ENCODE measurements at regions of chr3 and their contacts with region 1.

Region 1: GRCh38 chr3:141105828-141106628 is 54.9 kb downstream of the SPSB4 start:
- DNase-seq: no peak
- ATAC-seq: peak; percentile 37
- H3K4me3 Mint-ChIP-seq: no peak overlapping the region
- H3K27ac Mint-ChIP-seq: no peak overlapping the region
- H3K4me1 Mint-ChIP-seq: no peaks in the 10 kb centered on the region
- H3K27me3 Mint-ChIP-seq: peaks cover 6% of the 10 kb centered on the region
- CTCF ChIP-seq: no peak

Region 2: GRCh38 chr3:139427283-139427993 is 1678.6 kb before region 1 on chr3:
- CTCF ChIA-PET with region 1: no interaction called
- POLR2A ChIA-PET with region 1: no interaction called
- intact Hi-C with region 1: loop called (anchors 5 kb)
- DNase-seq: no peak
- ATAC-seq: peak; percentile 42
- H3K4me3 Mint-ChIP-seq: no peak overlapping the region
- H3K27ac Mint-ChIP-seq: no peak overlapping the region
- H3K4me1 Mint-ChIP-seq: no peaks in the 10 kb centered on the region
- H3K27me3 Mint-ChIP-seq: no peaks in the 10 kb centered on the region
- CTCF ChIP-seq: no peak

Region 3: GRCh38 chr3:140898340-140899180 is 207.5 kb before region 1 on chr3:
- CTCF ChIA-PET with region 1: interaction called, 6 read pairs
- POLR2A ChIA-PET with region 1: no interaction called
- intact Hi-C with region 1: loop called (anchors 1 kb)
- DNase-seq: no peak
- ATAC-seq: peak; percentile 54
- H3K4me3 Mint-ChIP-seq: no peak overlapping the region
- H3K27ac Mint-ChIP-seq: no peak overlapping the region
- H3K4me1 Mint-ChIP-seq: no peaks in the 10 kb centered on the region
- H3K27me3 Mint-ChIP-seq: peaks cover 21% of the 10 kb centered on the region
- CTCF ChIP-seq: peak; percentile 53

Region 4: GRCh38 chr3:140922634-140923033 is 183.4 kb before region 1 on chr3:
- CTCF ChIA-PET with region 1: interaction called, 11 read pairs
- POLR2A ChIA-PET with region 1: no interaction called
- intact Hi-C with region 1: loop called (anchors 1 kb)
- DNase-seq: no peak
- ATAC-seq: peak; percentile 34
- H3K4me3 Mint-ChIP-seq: no peak overlapping the region
- H3K27ac Mint-ChIP-seq: no peak overlapping the region
- H3K4me1 Mint-ChIP-seq: no peaks in the 10 kb centered on the region
- H3K27me3 Mint-ChIP-seq: peaks cover 20% of the 10 kb centered on the region
- CTCF ChIP-seq: no peak

Region 5: GRCh38 chr3:141000027-141000663 is 105.9 kb before region 1 on chr3:
- CTCF ChIA-PET with region 1: no interaction called
- POLR2A ChIA-PET with region 1: no interaction called
- intact Hi-C with region 1: loop called (anchors 1 kb)
- DNase-seq: no peak
- ATAC-seq: no peak
- H3K4me3 Mint-ChIP-seq: no peak overlapping the region
- H3K27ac Mint-ChIP-seq: no peak overlapping the region
- H3K4me1 Mint-ChIP-seq: no peaks in the 10 kb centered on the region
- H3K27me3 Mint-ChIP-seq: peaks cover 8% of the 10 kb centered on the region
- CTCF ChIP-seq: no peak